Activated CD4-positive, alpha-beta T cell treated with anti-CD3 and anti-CD28 coated beads for 36 hours (primary cell): ENCODE measurements at regions of chr16 and their contacts with region 1.

Region 1: DNA sequence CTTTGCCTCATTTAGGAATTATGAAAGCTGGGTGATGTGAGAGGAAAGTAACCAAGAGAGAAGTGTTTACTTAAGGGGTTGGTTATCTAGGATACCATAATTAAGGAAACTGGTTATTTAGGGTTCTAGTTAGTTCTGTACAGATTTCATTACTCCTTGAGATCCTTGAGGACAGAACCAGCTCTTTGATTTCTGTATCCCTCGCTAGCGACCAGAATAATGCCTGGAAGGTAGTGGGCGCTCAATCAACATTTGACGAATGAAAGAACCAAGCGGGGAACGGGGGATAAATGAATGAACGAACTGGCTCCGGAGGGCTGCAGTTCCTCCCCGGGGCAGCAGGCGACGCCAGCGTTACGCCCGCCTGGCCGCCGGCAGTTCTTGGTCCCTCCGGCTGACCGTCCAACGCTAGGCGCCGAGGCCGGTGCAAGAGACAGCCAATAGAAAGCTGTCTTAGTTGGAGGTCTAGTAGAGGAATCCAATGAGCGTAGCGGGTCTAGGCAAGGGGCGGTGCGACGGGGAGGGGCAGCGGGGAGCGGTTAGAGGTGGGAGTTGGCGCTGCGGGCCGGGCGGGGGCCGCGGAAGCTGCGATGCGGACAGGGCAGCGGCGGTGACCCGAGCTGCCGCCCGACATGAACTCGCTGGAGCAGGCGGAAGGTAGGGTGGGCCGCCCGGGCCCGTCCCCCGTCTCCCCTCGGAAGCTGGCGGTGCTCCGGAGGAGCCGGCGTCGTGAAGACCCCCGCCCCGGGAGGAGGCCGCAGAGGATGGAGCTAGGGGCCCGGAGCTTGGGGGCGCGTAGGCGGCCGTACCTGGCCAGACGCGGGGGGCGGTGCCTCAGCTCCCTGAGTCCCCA is at the start of gene CNEP1R1:
- DNase-seq: peak; percentile 95
- ATAC-seq: peak; percentile 97
- H3K4me3 Mint-ChIP-seq: peak within 1 kb of the TSS; percentile 96
- H3K27ac Mint-ChIP-seq: peak within 1 kb of the TSS; percentile 85
- H3K4me1 Mint-ChIP-seq: peaks cover 23% of the 10 kb centered on the region
- H3K27me3 Mint-ChIP-seq: no peaks in the 10 kb centered on the region
- total RNA-seq, gene CNEP1R1: 19.3 to 22.8 TPM

Region 2: DNA sequence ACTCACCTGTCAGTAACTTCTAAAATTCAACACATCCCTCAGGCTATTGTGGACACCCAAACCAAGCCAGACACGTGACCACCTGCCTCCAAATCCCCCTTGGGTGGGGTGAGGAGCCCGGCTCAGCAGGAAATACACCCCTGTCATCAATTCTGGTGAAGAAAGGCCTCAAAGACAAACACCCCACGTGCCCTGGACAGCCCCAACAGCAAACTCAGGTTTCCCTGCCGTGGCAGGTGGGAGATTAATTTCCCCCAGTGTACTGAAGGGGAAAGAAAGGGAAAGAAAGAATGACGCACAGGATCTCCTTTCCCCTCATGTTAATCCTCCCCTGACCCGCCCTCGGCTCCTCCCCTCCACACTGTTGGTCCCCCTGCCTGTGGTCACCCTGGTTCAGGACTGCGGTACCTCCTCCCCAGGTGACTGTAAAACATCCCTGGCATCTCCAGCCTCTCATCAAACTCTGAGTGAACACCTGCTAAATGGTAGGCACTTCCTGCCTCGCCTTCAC is 267.3 kb before region 1 on chr16:
- CTCF ChIA-PET with region 1: no interaction called
- POLR2A ChIA-PET with region 1: no interaction called
- intact Hi-C with region 1: no loop called
- DNase-seq: no peak
- ATAC-seq: no peak
- H3K4me3 Mint-ChIP-seq: no peak overlapping the region
- H3K27ac Mint-ChIP-seq: no peak overlapping the region
- H3K4me1 Mint-ChIP-seq: peaks cover 10% of the 10 kb centered on the region
- H3K27me3 Mint-ChIP-seq: peaks cover 28% of the 10 kb centered on the region

Region 3: DNA sequence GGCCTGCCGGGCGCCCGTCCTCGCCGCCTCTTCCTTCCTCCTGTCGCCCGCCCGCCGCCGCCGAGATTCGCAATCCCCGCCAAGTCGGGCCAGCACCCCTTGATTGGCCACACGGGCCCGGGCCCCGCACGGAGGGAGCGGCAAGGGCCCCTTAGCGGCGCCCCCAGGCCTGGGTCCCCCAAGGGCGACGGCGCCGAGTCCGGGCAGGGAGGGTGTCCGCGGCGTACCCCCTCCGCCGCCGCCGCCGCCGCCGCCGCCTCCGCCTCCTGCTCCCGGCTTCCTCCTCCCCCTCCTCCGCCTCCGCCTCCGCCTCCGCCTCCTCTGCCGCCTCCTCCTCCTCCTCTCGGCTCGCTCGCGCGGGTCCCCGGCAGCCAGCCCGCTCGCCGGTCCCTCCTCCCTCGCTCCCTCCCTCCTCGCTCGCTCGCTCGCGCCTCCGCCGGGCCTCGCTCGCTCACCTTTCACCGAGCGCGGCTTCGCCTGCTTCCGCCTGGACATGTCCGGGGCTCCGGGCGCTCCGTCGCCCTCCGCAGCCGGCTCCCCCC is 169.6 kb before region 1 on chr16:
- CTCF ChIA-PET with region 1: interaction called, 4 read pairs
- POLR2A ChIA-PET with region 1: no interaction called
- intact Hi-C with region 1: loop called in 1 of 2 experiments (anchors 5 kb)
- DNase-seq: peak; percentile 65
- ATAC-seq: peak; percentile 43
- H3K4me3 Mint-ChIP-seq: peak overlapping the region; percentile 32
- H3K27ac Mint-ChIP-seq: no peak overlapping the region
- H3K4me1 Mint-ChIP-seq: peaks cover 5% of the 10 kb centered on the region
- H3K27me3 Mint-ChIP-seq: peaks cover 40% of the 10 kb centered on the region

Region 4: DNA sequence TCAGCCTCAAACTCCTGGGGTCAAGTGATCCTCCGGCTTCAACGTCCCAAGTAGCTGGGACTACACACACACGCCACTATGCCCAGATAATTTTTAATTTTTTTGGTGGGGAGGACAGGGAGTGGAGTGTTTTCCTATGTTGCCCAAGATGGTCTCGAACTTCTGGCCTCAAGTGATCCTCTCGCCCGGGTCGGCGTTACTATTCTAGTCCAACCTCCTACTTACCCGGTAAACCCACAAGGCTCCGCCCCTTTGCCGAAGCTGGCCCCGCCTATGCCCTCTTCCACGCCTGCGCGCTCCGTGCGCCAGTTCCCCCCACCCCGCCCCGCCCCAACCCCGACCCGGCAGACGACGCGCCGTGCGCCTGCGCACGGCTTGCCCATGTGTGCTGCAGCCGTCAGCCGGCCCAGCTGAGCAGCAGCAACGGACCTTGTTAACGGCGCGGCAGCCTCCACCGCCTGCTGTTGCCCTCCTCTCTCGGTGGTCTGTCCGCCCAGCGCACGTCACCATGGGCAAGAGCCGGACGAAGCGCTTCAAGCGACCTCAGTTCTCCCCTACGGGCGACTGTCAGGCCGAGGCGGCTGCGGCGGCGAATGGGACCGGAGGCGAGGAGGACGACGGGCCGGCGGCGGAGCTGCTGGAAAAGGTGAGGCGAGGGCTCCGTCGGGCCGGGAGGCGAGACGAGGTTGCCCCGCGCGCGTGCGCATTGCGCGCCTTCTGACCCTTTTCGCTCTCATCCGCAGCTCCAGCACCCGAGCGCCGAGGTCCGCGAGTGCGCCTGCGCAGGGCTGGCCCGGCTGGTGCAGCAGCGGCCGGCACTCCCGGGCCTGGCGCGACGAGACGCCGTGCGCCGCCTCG is 40.9 kb after region 1 on chr16 and contains the start of gene HEATR3:
- CTCF ChIA-PET with region 1: interaction called, 44 read pairs
- POLR2A ChIA-PET with region 1: interaction called, 9 read pairs
- intact Hi-C with region 1: loop called (anchors 1 to 2 kb)
- DNase-seq: peak; percentile 97
- ATAC-seq: peak; percentile 86
- H3K4me3 Mint-ChIP-seq: peak within 1 kb of the TSS; percentile 87
- H3K27ac Mint-ChIP-seq: peak within 1 kb of the TSS; percentile 88
- H3K4me1 Mint-ChIP-seq: peaks cover 33% of the 10 kb centered on the region
- H3K27me3 Mint-ChIP-seq: no peaks in the 10 kb centered on the region
- total RNA-seq, gene HEATR3: 22.2 to 28.7 TPM

Region 5: DNA sequence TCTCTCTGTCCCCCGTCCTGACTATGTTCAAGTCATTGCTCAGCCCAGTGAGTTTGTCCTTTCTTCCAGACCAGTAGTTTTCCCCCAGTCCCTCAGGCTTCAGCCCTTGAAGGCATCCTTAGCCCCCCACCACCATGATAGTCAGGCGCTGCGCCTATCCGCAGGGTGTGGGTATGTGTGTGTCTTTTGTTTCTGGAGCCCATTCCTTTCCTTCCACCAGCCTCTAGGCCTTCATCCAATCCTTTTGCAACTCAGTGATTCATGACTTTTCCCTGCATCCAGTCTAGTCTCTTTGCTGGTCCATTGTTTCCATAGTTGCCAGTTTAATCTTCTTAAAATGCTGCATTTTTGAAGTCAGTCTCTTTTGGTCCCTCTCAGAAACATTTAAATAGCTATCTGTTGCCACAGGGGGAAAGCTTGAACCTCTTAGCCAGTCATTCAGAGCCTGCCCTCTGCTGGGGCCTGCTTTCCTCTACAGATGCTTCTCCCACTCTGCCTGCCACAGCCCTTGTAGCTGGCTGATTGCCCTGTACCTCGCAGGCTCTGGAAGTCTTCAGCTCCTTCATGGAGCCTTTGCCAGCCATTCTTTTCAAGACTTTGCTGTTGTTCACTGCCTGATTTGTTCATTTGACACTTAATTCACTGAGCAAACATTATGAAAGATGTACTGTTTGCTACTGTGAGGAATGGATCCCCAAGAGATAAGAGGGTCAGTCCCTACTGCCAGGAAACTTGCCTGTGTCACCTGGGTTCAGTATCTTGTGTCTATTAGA is 185.5 kb after region 1 on chr16:
- CTCF ChIA-PET with region 1: interaction called, 98 read pairs
- POLR2A ChIA-PET with region 1: interaction called, 5 read pairs
- intact Hi-C with region 1: loop called (anchors 1 kb)
- DNase-seq: peak; percentile 85
- ATAC-seq: peak; percentile 98
- H3K4me3 Mint-ChIP-seq: no peak overlapping the region
- H3K27ac Mint-ChIP-seq: peak overlapping the region; percentile 84
- H3K4me1 Mint-ChIP-seq: peaks cover 36% of the 10 kb centered on the region
- H3K27me3 Mint-ChIP-seq: no peaks in the 10 kb centered on the region

Region 6: GRCh38 chr16:50326949-50327402 is 302.1 kb after region 1 on chr16:
- CTCF ChIA-PET with region 1: interaction called, 11 read pairs
- POLR2A ChIA-PET with region 1: no interaction called
- intact Hi-C with region 1: no loop called
- DNase-seq: peak; percentile 81
- ATAC-seq: peak; percentile 92
- H3K4me3 Mint-ChIP-seq: no peak overlapping the region
- H3K27ac Mint-ChIP-seq: peak overlapping the region; percentile 82
- H3K4me1 Mint-ChIP-seq: peaks cover 58% of the 10 kb centered on the region
- H3K27me3 Mint-ChIP-seq: no peaks in the 10 kb centered on the region

Region 7: GRCh38 chr16:50368410-50369132 is 343.7 kb after region 1 on chr16 and contains the start of gene BRD7:
- CTCF ChIA-PET with region 1: interaction called, 5 read pairs
- POLR2A ChIA-PET with region 1: no interaction called
- intact Hi-C with region 1: loop called in 1 of 2 experiments (anchors 1 kb)
- DNase-seq: peak; percentile 82
- ATAC-seq: peak; percentile 73
- H3K4me3 Mint-ChIP-seq: peak within 1 kb of the TSS; percentile 89
- H3K27ac Mint-ChIP-seq: peak within 1 kb of the TSS; percentile 86
- H3K4me1 Mint-ChIP-seq: peaks cover 41% of the 10 kb centered on the region
- H3K27me3 Mint-ChIP-seq: no peaks in the 10 kb centered on the region
- total RNA-seq, gene BRD7: 87.7 to 104 TPM

Region 8: GRCh38 chr16:50548125-50548908 is 523.4 kb after region 1 on chr16 and contains the start of gene NKD1:
- CTCF ChIA-PET with region 1: interaction called, 4 read pairs
- POLR2A ChIA-PET with region 1: no interaction called
- intact Hi-C with region 1: loop called in 1 of 2 experiments (anchors 1 kb)
- DNase-seq: peak; percentile 87
- ATAC-seq: peak; percentile 84
- H3K4me3 Mint-ChIP-seq: peak within 1 kb of the TSS; percentile 81
- H3K27ac Mint-ChIP-seq: no peak within 1 kb of the TSS
- H3K4me1 Mint-ChIP-seq: peaks cover 28% of the 10 kb centered on the region
- H3K27me3 Mint-ChIP-seq: no peaks in the 10 kb centered on the region
- total RNA-seq, gene NKD1: 1.8 to 3.1 TPM

Region 9: DNA sequence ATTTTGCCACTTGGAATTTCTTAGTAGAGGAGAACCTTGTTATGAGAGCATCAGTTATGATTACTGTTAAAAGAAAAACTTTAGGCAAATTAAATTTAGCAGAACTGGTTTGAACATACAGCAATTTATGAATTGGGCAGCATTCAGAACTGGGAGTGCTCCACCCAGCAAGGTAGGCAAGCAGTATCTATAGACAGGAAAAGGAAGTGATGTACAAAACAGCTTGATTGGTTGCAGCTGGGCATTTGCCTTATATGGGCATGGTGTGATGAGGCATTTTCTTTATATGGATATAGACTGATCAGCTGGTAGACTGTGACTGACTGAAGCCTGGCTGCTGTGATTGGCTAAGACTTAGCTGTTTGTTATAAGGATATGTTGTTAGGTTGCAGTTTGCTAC is 699.4 kb after region 1 on chr16:
- CTCF ChIA-PET with region 1: no interaction called
- POLR2A ChIA-PET with region 1: no interaction called
- intact Hi-C with region 1: no loop called
- DNase-seq: no peak
- ATAC-seq: peak; percentile 67
- H3K4me3 Mint-ChIP-seq: no peak overlapping the region
- H3K27ac Mint-ChIP-seq: peak overlapping the region; percentile 37
- H3K4me1 Mint-ChIP-seq: peaks cover 26% of the 10 kb centered on the region
- H3K27me3 Mint-ChIP-seq: no peaks in the 10 kb centered on the region